ENCODE measurements at regions of chr15 and their contacts with region 1.

Region 1: DNA sequence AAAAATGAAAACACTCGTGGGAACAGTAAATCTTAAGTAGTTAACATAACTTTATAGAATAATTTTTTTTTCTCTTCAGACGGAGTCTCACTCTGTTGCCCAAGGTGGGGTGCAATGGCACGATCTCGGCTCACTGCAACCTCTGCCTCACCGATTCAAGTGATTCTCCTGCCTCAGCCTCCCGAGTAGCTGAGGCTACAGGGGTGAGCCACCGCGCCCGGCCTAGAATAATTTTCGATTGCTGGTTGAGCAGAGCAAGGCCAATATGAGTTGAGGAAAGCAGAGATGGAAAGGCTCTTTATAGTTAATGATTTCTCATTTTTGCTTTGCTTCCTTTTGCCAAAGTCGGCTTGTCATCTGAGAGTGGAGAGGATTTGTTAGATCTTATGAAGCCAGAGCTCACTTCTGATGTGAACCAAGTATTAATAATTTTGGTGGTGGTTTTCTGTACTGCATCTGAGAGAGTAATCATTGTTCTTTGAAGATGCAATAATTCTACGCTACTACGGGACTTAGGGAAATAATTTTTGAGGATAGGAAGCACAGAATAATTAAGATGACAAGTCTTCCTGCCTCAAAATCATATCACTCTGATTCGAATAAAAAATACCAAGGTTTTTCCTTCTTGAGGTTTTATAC is 1.6 kb upstream of the GOLM2 start:
- DNase-seq: no peak
- ATAC-seq: no peak
- H3K4me3 Mint-ChIP-seq: peak overlapping the region; percentile 88
- H3K27ac Mint-ChIP-seq: peak overlapping the region; percentile 93
- H3K4me1 Mint-ChIP-seq: peaks cover 35% of the 10 kb centered on the region
- H3K27me3 Mint-ChIP-seq: peaks cover 8% of the 10 kb centered on the region

Region 2: DNA sequence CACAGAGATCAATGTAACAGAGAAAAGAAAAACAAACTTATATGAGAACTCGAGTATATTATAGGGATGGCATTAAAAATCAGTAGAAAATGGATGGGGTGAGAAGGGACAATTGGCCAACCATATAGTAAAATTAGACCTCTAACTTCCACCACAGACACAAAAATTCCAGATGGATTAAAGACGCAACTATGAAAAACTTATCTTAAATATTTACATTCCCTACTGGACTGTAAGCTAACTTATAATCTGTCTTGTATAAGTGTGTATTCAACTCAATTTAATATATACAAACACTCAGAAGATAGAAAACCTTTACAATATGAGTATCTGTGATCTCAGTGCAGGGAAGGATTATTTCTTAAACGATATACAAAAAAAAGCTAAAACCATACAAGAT is 465.4 kb before region 1 on chr15:
- CTCF ChIA-PET with region 1: no interaction called
- POLR2A ChIA-PET with region 1: no interaction called
- DNase-seq: no peak
- ATAC-seq: no peak
- H3K4me3 Mint-ChIP-seq: peak overlapping the region; percentile 46
- H3K27ac Mint-ChIP-seq: peak overlapping the region; percentile 45
- H3K4me1 Mint-ChIP-seq: peaks cover 54% of the 10 kb centered on the region
- H3K27me3 Mint-ChIP-seq: no peaks in the 10 kb centered on the region

Region 3: DNA sequence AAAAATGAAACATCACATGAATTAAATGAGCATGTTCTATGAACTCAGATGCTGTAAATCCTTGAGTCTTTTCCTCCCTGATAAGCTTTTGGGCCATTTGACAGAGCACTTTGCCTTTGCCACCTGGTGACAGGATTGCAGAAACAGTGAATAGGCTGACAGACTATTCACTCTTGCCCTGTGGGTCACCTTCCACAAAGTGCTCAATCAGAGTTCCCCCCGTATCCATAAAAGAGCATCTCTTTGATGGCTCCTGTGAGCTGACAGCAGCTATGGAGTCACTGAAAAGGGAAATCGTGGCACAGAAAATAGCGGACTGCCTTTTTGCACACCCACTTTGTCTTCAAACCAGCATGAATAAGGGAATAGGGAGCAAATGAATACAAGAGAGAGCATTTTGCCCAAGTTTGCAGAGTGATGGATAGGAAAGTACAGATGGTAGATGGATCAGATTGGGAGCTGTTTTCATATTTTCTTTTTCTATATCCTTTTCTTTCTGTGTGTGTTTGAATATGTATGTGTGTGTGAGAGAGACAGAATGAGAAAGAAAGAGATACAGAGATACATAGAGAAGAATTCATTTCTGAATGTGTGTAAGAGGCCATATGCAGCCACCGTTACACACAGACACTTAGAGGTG is 36.2 kb before region 1 on chr15:
- CTCF ChIA-PET with region 1: no interaction called
- POLR2A ChIA-PET with region 1: no interaction called
- DNase-seq: no peak
- ATAC-seq: no peak
- H3K4me3 Mint-ChIP-seq: no peak overlapping the region
- H3K27ac Mint-ChIP-seq: no peak overlapping the region
- H3K4me1 Mint-ChIP-seq: no peaks in the 10 kb centered on the region
- H3K27me3 Mint-ChIP-seq: peaks cover 3% of the 10 kb centered on the region

Region 4: DNA sequence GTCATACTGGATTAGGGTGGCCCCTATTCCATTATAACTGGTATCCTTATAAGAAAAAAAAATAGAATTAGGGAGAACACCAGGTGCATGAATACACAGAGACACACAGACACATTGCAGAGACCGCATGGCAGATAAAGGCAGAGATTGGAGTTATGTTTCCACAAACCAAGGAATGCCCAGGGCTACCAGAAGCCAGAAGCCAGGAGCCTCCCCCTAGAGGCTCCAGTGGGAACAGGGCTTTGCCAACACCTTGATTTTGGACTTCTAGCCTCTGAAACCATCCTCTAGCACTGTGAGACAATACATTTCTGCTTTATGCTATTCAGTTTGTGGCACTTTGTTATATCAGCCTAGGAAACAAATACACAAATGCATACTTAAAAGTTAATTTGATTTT is 11.9 kb after region 1 on chr15:
- CTCF ChIA-PET with region 1: interaction called, 21 read pairs
- POLR2A ChIA-PET with region 1: interaction called, 6 read pairs
- DNase-seq: no peak
- ATAC-seq: peak; percentile 33
- H3K4me3 Mint-ChIP-seq: no peak overlapping the region
- H3K27ac Mint-ChIP-seq: no peak overlapping the region
- H3K4me1 Mint-ChIP-seq: peaks cover 20% of the 10 kb centered on the region
- H3K27me3 Mint-ChIP-seq: no peaks in the 10 kb centered on the region

Region 5: DNA sequence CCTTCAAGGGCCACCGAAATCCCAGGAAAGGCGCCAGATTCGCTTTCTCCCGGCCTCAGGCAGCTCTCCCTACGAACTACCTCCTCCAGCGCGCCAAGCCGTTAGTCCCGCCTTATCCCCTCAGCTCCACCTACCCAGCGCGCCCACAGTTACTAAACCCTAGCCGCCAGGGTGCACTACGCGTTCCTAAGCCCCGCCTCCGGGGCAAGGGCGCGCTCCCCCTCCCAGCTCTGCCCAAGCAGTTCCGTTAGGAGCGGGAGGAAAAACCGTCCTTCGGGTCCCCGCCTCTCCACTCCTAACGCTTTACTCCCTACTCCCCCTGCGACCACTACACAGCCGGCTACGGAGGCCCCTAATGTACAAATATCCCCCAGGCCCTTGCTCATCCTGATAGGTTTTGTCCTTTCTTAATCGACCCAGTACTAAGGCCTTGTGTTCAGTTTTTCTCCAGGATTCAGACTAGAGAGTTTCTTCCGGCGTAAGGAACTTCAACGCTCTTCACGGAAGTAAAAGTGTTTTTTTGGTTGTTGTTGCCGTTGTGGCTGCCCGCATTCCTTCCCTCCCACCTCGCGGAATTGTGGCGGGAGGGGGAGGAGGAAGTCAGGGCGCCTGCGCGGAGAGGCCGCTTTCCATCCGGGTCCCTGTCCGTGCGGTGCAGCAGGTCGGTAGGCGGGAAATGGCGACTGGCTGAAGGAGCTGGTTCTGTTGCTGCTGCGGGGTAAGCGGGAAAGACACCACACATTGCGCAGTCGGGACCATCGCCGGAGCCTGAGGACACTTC is 140.2 kb after region 1 on chr15 and contains the start of gene CTDSPL2:
- CTCF ChIA-PET with region 1: interaction called, 10 read pairs
- POLR2A ChIA-PET with region 1: interaction called, 38 read pairs
- DNase-seq: peak; percentile 96
- ATAC-seq: peak; percentile 98
- H3K4me3 Mint-ChIP-seq: peak within 1 kb of the TSS; percentile 96
- H3K27ac Mint-ChIP-seq: peak within 1 kb of the TSS; percentile 99
- H3K4me1 Mint-ChIP-seq: peaks cover 43% of the 10 kb centered on the region
- H3K27me3 Mint-ChIP-seq: no peaks in the 10 kb centered on the region
- total RNA-seq, gene CTDSPL2: 76.6 to 79.0 TPM

Measured in activated CD8-positive, alpha-beta T cell treated with anti-CD3 and anti-CD28 coated beads, Interleukin-2, amount 10 ng/mL, durations not matched to agents 7 days and 5 days (primary cell).